GM10248 (cell line): ENCODE measurements at regions of chr16 and their contacts with region 1.

Region 1: DNA sequence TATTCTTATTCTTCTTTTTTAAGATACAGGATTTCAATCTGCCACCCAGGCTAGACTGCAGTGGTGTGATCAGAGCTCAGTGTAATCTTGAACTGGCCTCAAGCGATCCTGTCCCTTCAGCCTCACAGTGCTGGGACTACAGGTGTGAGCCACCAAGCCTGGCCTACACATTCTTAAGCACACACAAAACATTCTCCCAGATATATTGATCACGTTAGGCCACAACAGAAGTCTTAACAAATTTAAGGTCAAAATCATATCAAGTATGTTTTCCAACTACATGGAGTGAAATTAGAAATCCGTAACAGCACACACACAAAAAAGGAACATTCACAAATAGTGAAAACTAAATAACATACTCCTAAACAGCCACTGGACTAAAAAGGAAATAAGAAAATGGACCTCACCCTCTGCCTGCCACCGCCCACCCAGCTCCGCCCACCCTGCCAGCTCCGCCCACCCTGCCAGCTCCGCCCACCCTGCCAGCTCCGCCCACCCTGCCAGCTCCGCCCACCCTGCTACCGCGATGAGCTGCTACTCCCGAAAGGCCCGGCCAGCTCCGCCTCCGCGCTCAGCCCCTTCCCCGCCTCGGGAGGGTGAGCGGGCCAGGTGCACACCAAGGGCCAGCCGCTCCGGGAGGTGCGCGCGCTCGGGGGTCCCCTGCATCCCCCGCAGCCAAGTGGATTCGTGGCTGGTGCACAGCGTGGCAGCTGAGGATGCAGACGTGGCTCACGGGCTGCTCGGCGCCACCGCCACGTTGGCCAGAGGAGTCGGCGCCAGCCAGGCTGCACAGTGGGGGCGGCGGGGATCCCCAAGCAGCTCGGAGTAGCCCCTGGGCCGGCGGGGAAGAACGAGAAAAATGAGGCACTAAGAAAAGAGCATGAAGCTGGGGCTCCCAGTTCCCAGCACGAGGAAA is 41.2 kb downstream of the C16orf87 start:
- DNase-seq: peak; percentile 87
- CTCF ChIP-seq: no peak

Region 2: GRCh38 chr16:46519063-46519462 is 270.7 kb before region 1 on chr16:
- CTCF ChIA-PET with region 1: no interaction called
- POLR2A ChIA-PET with region 1: no interaction called
- DNase-seq: no peak
- CTCF ChIP-seq: no peak

Region 3: DNA sequence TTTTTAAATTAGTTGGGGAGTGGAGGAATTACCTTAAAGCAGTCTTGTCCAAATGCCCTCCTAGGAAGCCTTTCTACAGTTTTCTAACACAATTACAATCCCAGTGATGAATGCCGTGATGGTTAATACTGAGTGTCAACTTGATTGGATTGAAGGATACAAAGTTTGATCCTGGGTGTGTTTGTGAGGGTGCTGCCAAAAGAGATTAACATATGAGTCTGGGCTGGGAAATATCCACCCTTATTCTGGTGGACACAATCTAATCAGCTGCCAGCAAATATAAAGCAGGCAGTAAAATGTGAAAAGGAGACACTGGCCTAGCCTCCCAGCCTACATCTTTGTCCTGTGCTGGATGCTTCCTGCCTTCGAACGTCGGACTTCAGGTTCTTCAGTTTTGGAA is 88.1 kb before region 1 on chr16:
- CTCF ChIA-PET with region 1: no interaction called
- POLR2A ChIA-PET with region 1: no interaction called
- DNase-seq: no peak
- CTCF ChIP-seq: no peak

Region 4: GRCh38 chr16:46757339-46758050 is 32.3 kb before region 1 on chr16:
- CTCF ChIA-PET with region 1: no interaction called
- POLR2A ChIA-PET with region 1: no interaction called
- DNase-seq: no peak
- CTCF ChIP-seq: no peak

Region 5: GRCh38 chr16:46777804-46778475 is 11.8 kb before region 1 on chr16:
- CTCF ChIA-PET with region 1: interaction called, 6 read pairs
- POLR2A ChIA-PET with region 1: interaction called, 10 read pairs
- DNase-seq: no peak
- CTCF ChIP-seq: no peak

Region 6: DNA sequence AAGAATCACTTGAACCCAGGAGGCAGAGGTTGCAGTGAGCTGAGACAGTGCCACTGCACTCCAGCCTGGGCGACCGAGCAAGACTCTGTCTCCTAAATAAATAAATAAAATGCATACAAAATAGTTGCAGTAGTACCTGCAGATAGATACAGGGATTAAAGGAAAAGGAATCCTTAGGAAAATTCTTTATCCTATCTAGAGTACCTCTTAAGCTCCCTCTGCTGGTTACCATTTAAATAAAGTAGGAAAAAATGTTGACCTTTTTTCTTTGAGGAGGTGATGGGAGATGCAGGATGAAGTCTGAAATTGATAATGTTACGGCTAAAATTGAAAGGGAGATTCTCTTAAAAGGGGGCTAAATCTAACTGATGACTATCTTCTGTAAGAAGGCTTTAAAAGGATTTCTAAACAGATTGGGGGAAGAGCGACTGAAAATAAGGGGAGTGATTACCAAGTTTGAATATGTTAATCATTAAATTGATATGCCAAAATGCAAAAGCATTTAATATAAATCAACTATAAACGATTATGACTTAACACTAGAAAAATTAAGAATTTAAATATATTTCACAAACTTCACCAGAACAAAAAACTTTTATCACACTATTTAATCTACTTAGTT is 11.8 kb after region 1 on chr16:
- CTCF ChIA-PET with region 1: interaction called, 39 read pairs
- POLR2A ChIA-PET with region 1: interaction called, 3 read pairs
- DNase-seq: no peak
- CTCF ChIP-seq: no peak